Calu3 (cell line): ENCODE measurements at regions of chr21 and their contacts with region 1.

Region 1: DNA sequence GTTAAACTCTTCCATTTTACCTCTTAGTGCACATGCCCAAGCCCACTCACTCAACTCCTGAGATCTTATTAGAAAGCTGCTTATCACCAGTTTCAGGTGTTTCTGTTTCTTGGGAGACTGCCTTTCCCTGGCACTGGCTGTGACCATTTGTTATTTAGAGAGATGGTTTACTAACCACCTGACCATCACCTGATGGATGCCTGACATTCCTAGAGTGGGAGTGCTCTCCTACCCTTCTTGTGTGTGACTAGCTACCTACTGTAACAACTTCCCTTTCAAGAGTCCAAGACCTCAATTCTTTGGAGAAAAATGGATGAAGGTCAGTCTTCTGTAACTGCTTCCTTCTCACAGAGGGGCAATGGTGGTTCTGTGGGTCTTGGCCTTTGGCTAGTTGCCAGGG is 755.2 kb upstream of the ADAMTS5 start:
- DNase-seq: peak; percentile 40
- H3K4me3 Mint-ChIP-seq: peak overlapping the region; percentile 47
- H3K27ac Mint-ChIP-seq: peak overlapping the region; percentile 90
- H3K4me1 Mint-ChIP-seq: peaks cover 37% of the 10 kb centered on the region
- H3K27me3 Mint-ChIP-seq: no peaks in the 10 kb centered on the region
- CTCF ChIP-seq: no peak

Region 2: GRCh38 chr21:27787046-27787445 is 65.0 kb after region 1 on chr21:
- CTCF ChIA-PET with region 1: no interaction called
- intact Hi-C with region 1: no loop called
- DNase-seq: no peak
- H3K4me3 Mint-ChIP-seq: no peak overlapping the region
- H3K27ac Mint-ChIP-seq: no peak overlapping the region
- H3K4me1 Mint-ChIP-seq: peaks cover 12% of the 10 kb centered on the region
- H3K27me3 Mint-ChIP-seq: no peaks in the 10 kb centered on the region
- CTCF ChIP-seq: no peak

Region 3: DNA sequence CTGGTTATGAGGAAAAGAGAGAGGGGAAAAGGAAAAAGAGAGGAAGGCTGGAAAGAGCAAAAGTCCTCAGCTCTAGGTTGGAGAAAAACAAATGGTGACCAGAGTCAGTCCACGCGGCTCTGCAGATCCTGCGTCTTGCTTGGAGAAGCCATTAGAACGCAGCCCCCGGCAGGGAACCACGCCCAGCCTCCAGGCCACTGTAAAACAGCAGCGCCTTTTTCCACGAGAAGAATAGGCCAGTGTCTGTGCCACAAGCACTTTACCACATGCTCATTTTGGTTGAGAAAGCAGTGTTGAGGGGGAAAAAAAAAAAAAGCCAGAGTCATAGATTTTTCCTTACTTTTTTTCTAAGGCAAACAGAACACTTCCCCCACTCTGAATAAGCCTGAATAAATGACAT is 91.7 kb after region 1 on chr21:
- CTCF ChIA-PET with region 1: no interaction called
- intact Hi-C with region 1: loop called (anchors 10 kb)
- DNase-seq: peak; percentile 26
- H3K4me3 Mint-ChIP-seq: peak overlapping the region; percentile 18
- H3K27ac Mint-ChIP-seq: peak overlapping the region; percentile 27
- H3K4me1 Mint-ChIP-seq: no peaks in the 10 kb centered on the region
- H3K27me3 Mint-ChIP-seq: no peaks in the 10 kb centered on the region
- CTCF ChIP-seq: no peak